Naive thymus-derived CD4-positive, alpha-beta T cell (primary cell): ENCODE measurements at regions of chr6 and their contacts with region 1.

Region 1: GRCh38 chr6:137218917-137219663 is at the start of gene IFNGR1:
- DNase-seq: peak; percentile 89 to 97 (median 93)
- ATAC-seq: peak; percentile 92
- H3K4me3 ChIP-seq: peak within 1 kb of the TSS; percentile 88
- H3K4me3 Mint-ChIP-seq: peak within 1 kb of the TSS; percentile 85 to 100 (median 99)
- H3K27ac ChIP-seq: peak within 1 kb of the TSS; percentile 91
- H3K27ac Mint-ChIP-seq: peak within 1 kb of the TSS; percentile 91 to 100 (median 100)
- H3K4me1 ChIP-seq: peaks cover 20 to 43% of the 10 kb centered on the region in 2 donors
- H3K4me1 Mint-ChIP-seq: peaks cover 36 to 84% (median 69%) of the 10 kb centered on the region in 7 donors
- H3K27me3 ChIP-seq: no peaks in the 10 kb centered on the region
- H3K27me3 Mint-ChIP-seq: no peaks in the 10 kb centered on the region
- total RNA-seq, gene IFNGR1: 29.2 to 90.7 (median 31.3) TPM

Region 2: GRCh38 chr6:136249811-136250685 is 969.0 kb before region 1 on chr6 and contains the start of gene MTFR2:
- CTCF ChIA-PET with region 1: no interaction called
- POLR2A ChIA-PET with region 1: no interaction called
- intact Hi-C with region 1: loop called in 1 of 2 experiments (anchors 1 kb)
- DNase-seq: peak; percentile 74 to 97 (median 93)
- ATAC-seq: peak; percentile 95
- H3K4me3 ChIP-seq: peak within 1 kb of the TSS; percentile 81
- H3K4me3 Mint-ChIP-seq: peak within 1 kb of the TSS; percentile 91 to 99 (median 94)
- H3K27ac ChIP-seq: peak within 1 kb of the TSS; percentile 59
- H3K27ac Mint-ChIP-seq: peak within 1 kb of the TSS; percentile 47 to 89 (median 80)
- H3K4me1 ChIP-seq: peaks cover 7 to 15% of the 10 kb centered on the region in 2 donors
- H3K4me1 Mint-ChIP-seq: peaks cover 6 to 62% (median 43%) of the 10 kb centered on the region in 7 donors
- H3K27me3 ChIP-seq: no peaks in the 10 kb centered on the region
- H3K27me3 Mint-ChIP-seq: no peaks in the 10 kb centered on the region
- total RNA-seq, gene MTFR2: 0.92 to 20.4 (median 1.9) TPM

Region 3: GRCh38 chr6:136822376-136823127 is 396.5 kb before region 1 on chr6 and contains the start of gene PEX7:
- CTCF ChIA-PET with region 1: no interaction called
- POLR2A ChIA-PET with region 1: no interaction called
- intact Hi-C with region 1: loop called (anchors 1 kb)
- DNase-seq: peak; percentile 83 to 94 (median 92)
- ATAC-seq: peak; percentile 95
- H3K4me3 ChIP-seq: peak within 1 kb of the TSS; percentile 96
- H3K4me3 Mint-ChIP-seq: peak within 1 kb of the TSS; percentile 87 to 99 (median 94)
- H3K27ac ChIP-seq: peak within 1 kb of the TSS; percentile 91
- H3K27ac Mint-ChIP-seq: peak within 1 kb of the TSS; percentile 91 to 99 (median 96)
- H3K4me1 ChIP-seq: peaks cover 6 to 13% of the 10 kb centered on the region in 2 donors
- H3K4me1 Mint-ChIP-seq: peaks cover 13 to 50% (median 40%) of the 10 kb centered on the region in 7 donors
- H3K27me3 ChIP-seq: peaks cover 0 to 3% of the 10 kb centered on the region in 2 donors
- H3K27me3 Mint-ChIP-seq: peaks cover 3 to 10% (median 8%) of the 10 kb centered on the region in 5 donors
- total RNA-seq, gene PEX7: 4.0 to 6.2 (median 5.4) TPM

Region 4: GRCh38 chr6:137155830-137156229 is 63.3 kb before region 1 on chr6:
- CTCF ChIA-PET with region 1: no interaction called
- POLR2A ChIA-PET with region 1: no interaction called
- intact Hi-C with region 1: loop called in 1 of 2 experiments (anchors 5 kb)
- DNase-seq: peak in 8 of 9 donors; percentile 11 to 53 (median 26)
- ATAC-seq: peak; percentile 90
- H3K4me3 ChIP-seq: no peak overlapping the region
- H3K4me3 Mint-ChIP-seq: peak overlapping the region in 8 of 10 donors; percentile 4 to 71 (median 31)
- H3K27ac ChIP-seq: no peak overlapping the region
- H3K27ac Mint-ChIP-seq: peak overlapping the region in 3 of 9 donors; percentile 63 to 88 (median 63)
- H3K4me1 ChIP-seq: peaks cover 8 to 13% of the 10 kb centered on the region in 2 donors
- H3K4me1 Mint-ChIP-seq: peaks cover 12 to 37% (median 15%) of the 10 kb centered on the region in 7 donors
- H3K27me3 ChIP-seq: no peaks in the 10 kb centered on the region
- H3K27me3 Mint-ChIP-seq: peaks cover 4 to 30% (median 9%) of the 10 kb centered on the region in 5 donors

Region 5: GRCh38 chr6:137233911-137234863 is 15.1 kb after region 1 on chr6:
- CTCF ChIA-PET with region 1: interaction called, 3 read pairs
- POLR2A ChIA-PET with region 1: interaction called, 4 read pairs
- intact Hi-C with region 1: loop called (anchors 1 to 2 kb)
- DNase-seq: peak in 4 of 9 donors; percentile 14 to 40 (median 32)
- ATAC-seq: peak; percentile 72
- H3K4me3 ChIP-seq: no peak overlapping the region
- H3K4me3 Mint-ChIP-seq: peak overlapping the region in 9 of 10 donors; percentile 9 to 65 (median 46)
- H3K27ac ChIP-seq: no peak overlapping the region
- H3K27ac Mint-ChIP-seq: peak overlapping the region in 7 of 9 donors; percentile 3 to 51 (median 32)
- H3K4me1 ChIP-seq: peaks cover 37 to 51% of the 10 kb centered on the region in 2 donors
- H3K4me1 Mint-ChIP-seq: peaks cover 30 to 60% (median 51%) of the 10 kb centered on the region in 7 donors
- H3K27me3 ChIP-seq: no peaks in the 10 kb centered on the region
- H3K27me3 Mint-ChIP-seq: peaks cover 0 to 11% (median 0%) of the 10 kb centered on the region in 5 donors

Region 6: DNA sequence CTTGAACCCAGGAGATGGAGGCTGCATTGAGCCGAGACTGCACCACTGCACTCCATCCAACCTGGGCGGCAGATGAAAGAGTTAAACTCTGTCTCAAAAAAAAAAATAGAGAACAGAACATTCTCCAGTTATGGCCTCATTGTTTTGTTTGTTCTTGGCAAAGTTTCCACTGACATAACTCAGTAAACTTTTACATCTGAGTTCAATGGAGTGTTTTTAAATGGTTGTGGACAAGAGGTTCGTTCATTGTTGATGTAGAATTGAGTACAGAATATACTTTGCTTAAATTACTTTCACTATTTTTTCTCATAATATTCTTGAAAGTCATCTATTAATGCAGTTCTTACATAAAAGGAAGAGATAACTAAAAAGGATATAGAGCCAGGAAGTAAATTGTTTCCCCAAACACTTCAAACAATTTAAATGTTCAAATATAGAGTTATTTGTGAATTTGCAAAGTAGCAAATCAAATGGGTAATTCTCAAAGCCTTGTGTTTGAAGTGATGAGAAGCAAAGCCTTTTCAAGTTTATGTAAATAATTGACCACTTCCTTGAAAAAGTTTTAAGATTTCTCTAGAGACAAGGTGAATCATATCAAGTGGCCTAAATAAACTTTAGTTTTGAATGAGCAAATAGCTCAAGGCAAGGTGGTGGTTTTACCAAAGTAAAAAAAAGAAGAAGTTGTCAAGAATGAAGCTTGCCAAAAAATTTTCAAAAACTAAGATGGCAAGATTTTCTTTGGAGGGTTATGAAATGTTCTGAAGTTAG is 42.5 kb after region 1 on chr6:
- CTCF ChIA-PET with region 1: no interaction called
- POLR2A ChIA-PET with region 1: no interaction called
- intact Hi-C with region 1: no loop called
- DNase-seq: no peak
- ATAC-seq: peak; percentile 46
- H3K4me3 ChIP-seq: no peak overlapping the region
- H3K4me3 Mint-ChIP-seq: no peak overlapping the region
- H3K27ac ChIP-seq: no peak overlapping the region
- H3K27ac Mint-ChIP-seq: peak overlapping the region in 1 of 9 donors; percentile 11
- H3K4me1 ChIP-seq: peaks cover 0 to 14% of the 10 kb centered on the region in 2 donors
- H3K4me1 Mint-ChIP-seq: peaks cover 0 to 14% (median 4%) of the 10 kb centered on the region in 7 donors
- H3K27me3 ChIP-seq: no peaks in the 10 kb centered on the region
- H3K27me3 Mint-ChIP-seq: peaks cover 7 to 34% (median 22%) of the 10 kb centered on the region in 5 donors

Region 7: GRCh38 chr6:137291441-137291840 is 72.4 kb after region 1 on chr6:
- CTCF ChIA-PET with region 1: no interaction called
- POLR2A ChIA-PET with region 1: no interaction called
- intact Hi-C with region 1: no loop called
- DNase-seq: no peak
- ATAC-seq: peak; percentile 82
- H3K4me3 ChIP-seq: no peak overlapping the region
- H3K4me3 Mint-ChIP-seq: no peak overlapping the region
- H3K27ac ChIP-seq: no peak overlapping the region
- H3K27ac Mint-ChIP-seq: no peak overlapping the region
- H3K4me1 ChIP-seq: peaks cover 0 to 6% of the 10 kb centered on the region in 2 donors
- H3K4me1 Mint-ChIP-seq: peaks cover 0 to 13% (median 4%) of the 10 kb centered on the region in 7 donors
- H3K27me3 ChIP-seq: no peaks in the 10 kb centered on the region
- H3K27me3 Mint-ChIP-seq: peaks cover 2 to 27% (median 5%) of the 10 kb centered on the region in 5 donors

Region 8: GRCh38 chr6:137699031-137699683 is 480.1 kb after region 1 on chr6:
- CTCF ChIA-PET with region 1: no interaction called
- POLR2A ChIA-PET with region 1: no interaction called
- intact Hi-C with region 1: loop called in 1 of 2 experiments (anchors 2 kb)
- DNase-seq: no peak
- ATAC-seq: peak; percentile 81
- H3K4me3 ChIP-seq: no peak overlapping the region
- H3K4me3 Mint-ChIP-seq: peak overlapping the region in 9 of 10 donors; percentile 3 to 84 (median 40)
- H3K27ac ChIP-seq: no peak overlapping the region
- H3K27ac Mint-ChIP-seq: peak overlapping the region; percentile 22 to 98 (median 49)
- H3K4me1 ChIP-seq: peaks cover 11 to 14% of the 10 kb centered on the region in 2 donors
- H3K4me1 Mint-ChIP-seq: peaks cover 11 to 56% (median 15%) of the 10 kb centered on the region in 7 donors
- H3K27me3 ChIP-seq: no peaks in the 10 kb centered on the region
- H3K27me3 Mint-ChIP-seq: peaks cover 0 to 22% (median 5%) of the 10 kb centered on the region in 5 donors